IMR-90 (cell line): ENCODE measurements at regions of chr16 and their contacts with region 1.

Region 1: GRCh38 chr16:3457434-3458252 is 14.2 kb downstream of the NAA60 start:
- DNase-seq: peak; percentile 87
- ATAC-seq: peak; percentile 92
- H3K4me3 ChIP-seq: peak overlapping the region; percentile 86
- H3K27ac ChIP-seq: peak overlapping the region; percentile 84
- H3K4me1 ChIP-seq: peaks cover 9% of the 10 kb centered on the region
- H3K27me3 ChIP-seq: no peaks in the 10 kb centered on the region
- CTCF ChIP-seq: peak; percentile 59
- POLR2A ChIP-seq: peak; percentile 82
- RAD21 ChIP-seq: peak; percentile 45

Region 2: GRCh38 chr16:3501783-3502420 is 44.3 kb after region 1 on chr16:
- CTCF ChIA-PET with region 1: no interaction called
- POLR2A ChIA-PET with region 1: no interaction called
- dilution Hi-C with region 1: no loop called
- in situ Hi-C with region 1: no loop called
- intact Hi-C with region 1: loop called (anchors 2 kb)
- DNase-seq: no peak
- ATAC-seq: no peak
- H3K4me3 ChIP-seq: peak overlapping the region; percentile 59
- H3K27ac ChIP-seq: peak overlapping the region; percentile 23; the same call in 1 of the 2 replicates
- H3K4me1 ChIP-seq: peaks cover 5% of the 10 kb centered on the region; the same call in 1 of the 2 replicates
- H3K27me3 ChIP-seq: no peaks in the 10 kb centered on the region
- CTCF ChIP-seq: no peak
- POLR2A ChIP-seq: no peak
- RAD21 ChIP-seq: no peak

Region 3: DNA sequence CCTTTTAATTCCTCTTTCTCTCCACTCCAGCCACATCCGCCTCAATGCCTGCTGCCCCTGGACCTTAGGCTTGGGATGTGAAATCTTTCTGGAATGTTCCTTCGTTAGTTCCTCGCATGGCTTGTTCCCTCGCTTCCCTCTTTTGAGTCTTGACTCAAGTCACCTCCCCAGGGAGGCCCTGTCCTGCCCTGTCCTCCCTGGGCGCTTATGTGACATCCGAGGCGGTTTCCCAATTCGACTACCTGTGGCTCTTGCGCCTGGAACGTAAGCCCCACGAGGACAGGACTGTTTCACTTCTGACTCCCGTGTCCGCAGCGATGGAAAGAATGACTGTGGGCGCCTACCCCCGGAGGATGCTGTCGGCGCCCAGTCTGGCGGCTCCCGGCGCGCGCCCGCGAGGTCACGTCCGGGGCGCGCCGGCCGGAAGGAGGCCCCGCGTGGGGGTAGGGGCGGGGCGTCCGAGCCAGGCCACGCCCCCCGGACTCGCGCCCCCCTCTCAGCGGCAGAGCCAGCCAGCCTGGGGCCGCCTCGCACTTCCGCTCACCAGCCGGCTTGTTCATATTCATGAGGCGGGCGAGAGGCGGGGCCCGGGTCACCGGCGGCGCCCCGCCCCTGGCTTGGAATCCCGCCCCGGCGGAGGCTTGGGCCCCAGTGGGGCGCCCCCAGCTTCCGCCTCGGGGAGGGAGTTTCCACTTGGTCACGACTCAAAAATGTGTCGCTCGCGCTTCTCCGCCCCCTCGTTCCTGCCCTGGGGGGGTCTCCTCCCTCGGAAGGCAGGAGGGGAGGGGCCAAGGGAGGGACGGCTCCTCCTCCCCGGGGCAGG is 849.8 kb after region 1 on chr16:
- CTCF ChIA-PET with region 1: no interaction called
- POLR2A ChIA-PET with region 1: no interaction called
- dilution Hi-C with region 1: no loop called
- in situ Hi-C with region 1: no loop called
- intact Hi-C with region 1: no loop called
- DNase-seq: peak; percentile 94
- ATAC-seq: peak; percentile 90
- H3K4me3 ChIP-seq: peak overlapping the region; percentile 77
- H3K27ac ChIP-seq: peak overlapping the region; percentile 87
- H3K4me1 ChIP-seq: peaks cover 7% of the 10 kb centered on the region
- H3K27me3 ChIP-seq: no peaks in the 10 kb centered on the region
- CTCF ChIP-seq: no peak
- POLR2A ChIP-seq: no peak; the same call in 1 of the 2 replicates
- RAD21 ChIP-seq: no peak